ENCODE measurements at regions of chr15 and their contacts with region 1.

Region 1: GRCh38 chr15:52790162-52790708 is at the start of gene ONECUT1:
- DNase-seq: peak; percentile 74 to 95 (median 90)
- ATAC-seq: peak; percentile 46 to 72 (median 63)
- H3K4me3 ChIP-seq: peak within 1 kb of the TSS; percentile 61 to 83 (median 66)
- H3K27ac ChIP-seq: peak within 1 kb of the TSS; percentile 62 to 92 (median 79)
- H3K4me1 ChIP-seq: no peaks in the 10 kb centered on the region
- H3K27me3 ChIP-seq: no peaks in the 10 kb centered on the region
- CTCF ChIP-seq: no peak
- total RNA-seq, gene ONECUT1: 30.4 to 56.2 (median 37.7) TPM

Region 2: GRCh38 chr15:52834379-52834778 is 44.1 kb after region 1 on chr15:
- intact Hi-C with region 1: no loop called
- DNase-seq: no peak
- ATAC-seq: no peak
- H3K4me3 ChIP-seq: no peak overlapping the region
- H3K27ac ChIP-seq: no peak overlapping the region
- H3K4me1 ChIP-seq: no peaks in the 10 kb centered on the region
- H3K27me3 ChIP-seq: no peaks in the 10 kb centered on the region
- CTCF ChIP-seq: no peak

Region 3: DNA sequence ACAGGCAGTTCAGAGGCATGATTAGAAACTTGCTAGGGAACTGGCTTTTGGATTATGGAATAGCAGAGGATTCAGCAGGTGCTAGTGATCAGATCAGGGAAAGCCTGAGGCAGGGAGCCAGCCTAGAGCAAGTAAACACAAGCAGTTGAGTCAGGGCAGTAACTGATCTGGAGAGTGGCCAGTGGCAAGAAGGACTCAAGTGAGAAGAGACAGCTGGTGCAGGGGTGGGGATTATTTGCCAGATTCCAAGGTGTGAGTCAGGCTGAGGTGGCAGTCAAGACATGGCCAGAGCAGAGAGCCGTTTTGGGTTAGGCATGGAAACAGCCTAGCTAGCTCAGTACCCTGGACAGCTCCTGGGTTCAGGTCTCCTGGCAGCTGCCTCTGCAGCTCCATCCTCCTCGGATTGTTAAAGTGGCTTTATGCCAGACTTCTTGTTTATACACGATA is 281.8 kb after region 1 on chr15:
- intact Hi-C with region 1: loop called in 1 of 3 experiments (anchors 10 kb)
- DNase-seq: peak; percentile 76 to 98 (median 96)
- ATAC-seq: peak; percentile 97 to 99 (median 98)
- H3K4me3 ChIP-seq: no peak overlapping the region
- H3K27ac ChIP-seq: peak overlapping the region in 1 of 4 donors; percentile 45
- H3K4me1 ChIP-seq: peaks cover 0 to 11% (median 4%) of the 10 kb centered on the region in 3 donors
- H3K27me3 ChIP-seq: no peaks in the 10 kb centered on the region
- CTCF ChIP-seq: no peak